IMR-90 (cell line): ENCODE measurements at regions of chr7 and their contacts with region 1.

Region 1: GRCh38 chr7:44082541-44083207 is 344 bp upstream of the POLM start:
- DNase-seq: peak; percentile 98
- ATAC-seq: peak; percentile 98
- H3K4me3 ChIP-seq: peak overlapping the region; percentile 56
- H3K27ac ChIP-seq: peak overlapping the region; percentile 72
- H3K4me1 ChIP-seq: peaks cover 16% of the 10 kb centered on the region
- H3K27me3 ChIP-seq: no peaks in the 10 kb centered on the region
- CTCF ChIP-seq: no peak
- POLR2A ChIP-seq: no peak
- RAD21 ChIP-seq: no peak

Region 2: GRCh38 chr7:43647673-43648472 is 434.8 kb before region 1 on chr7:
- CTCF ChIA-PET with region 1: no interaction called
- POLR2A ChIA-PET with region 1: no interaction called
- dilution Hi-C with region 1: no loop called
- in situ Hi-C with region 1: no loop called
- intact Hi-C with region 1: no loop called
- DNase-seq: peak; percentile 100
- ATAC-seq: peak; percentile 68
- H3K4me3 ChIP-seq: peak overlapping the region; percentile 1; the same call in 1 of the 2 replicates
- H3K27ac ChIP-seq: peak overlapping the region; percentile 95
- H3K4me1 ChIP-seq: peaks cover 42% of the 10 kb centered on the region
- H3K27me3 ChIP-seq: no peaks in the 10 kb centered on the region
- CTCF ChIP-seq: no peak
- POLR2A ChIP-seq: peak; percentile 79
- RAD21 ChIP-seq: no peak

Region 3: DNA sequence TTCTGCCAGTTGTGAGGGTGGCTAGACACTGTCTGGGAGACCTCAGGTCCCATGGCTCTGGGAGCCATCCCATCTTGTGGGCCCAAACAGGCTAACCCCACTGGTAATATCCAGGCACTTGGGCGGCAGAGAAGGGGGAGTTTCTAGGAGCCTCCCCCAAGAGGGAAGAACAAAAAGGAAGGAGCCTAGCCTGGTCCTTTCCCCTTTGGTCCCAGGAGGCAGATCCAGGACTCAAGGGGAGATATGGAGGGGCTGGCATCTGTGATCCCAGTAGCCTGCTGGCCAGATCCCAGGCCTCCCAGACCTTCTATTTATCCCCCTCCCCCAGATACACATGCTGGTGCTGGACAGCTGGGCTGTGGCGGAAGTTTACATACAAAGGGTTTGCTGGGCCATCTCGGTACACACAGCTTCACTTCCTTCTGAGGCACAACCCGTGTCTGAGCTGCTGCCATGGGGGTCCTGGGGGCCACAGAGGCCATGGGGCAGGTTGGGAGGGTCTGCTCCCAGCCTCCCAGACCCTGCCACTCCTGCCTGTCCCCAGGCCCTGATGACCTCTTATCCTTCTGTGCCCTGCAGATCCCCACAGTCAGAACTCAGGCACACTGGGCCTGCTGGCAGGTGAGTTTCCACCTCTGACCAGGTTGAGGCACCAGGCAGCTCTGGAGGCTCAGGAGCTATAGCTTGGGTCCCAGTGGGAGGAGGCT is 18.3 kb after region 1 on chr7:
- CTCF ChIA-PET with region 1: no interaction called
- POLR2A ChIA-PET with region 1: no interaction called
- dilution Hi-C with region 1: no loop called
- in situ Hi-C with region 1: no loop called
- intact Hi-C with region 1: loop called (anchors 2 kb)
- DNase-seq: peak; percentile 40
- ATAC-seq: peak; percentile 30
- H3K4me3 ChIP-seq: no peak overlapping the region
- H3K27ac ChIP-seq: peak overlapping the region; percentile 70
- H3K4me1 ChIP-seq: peaks cover 33% of the 10 kb centered on the region
- H3K27me3 ChIP-seq: no peaks in the 10 kb centered on the region
- CTCF ChIP-seq: no peak
- POLR2A ChIP-seq: no peak
- RAD21 ChIP-seq: no peak

Region 4: DNA sequence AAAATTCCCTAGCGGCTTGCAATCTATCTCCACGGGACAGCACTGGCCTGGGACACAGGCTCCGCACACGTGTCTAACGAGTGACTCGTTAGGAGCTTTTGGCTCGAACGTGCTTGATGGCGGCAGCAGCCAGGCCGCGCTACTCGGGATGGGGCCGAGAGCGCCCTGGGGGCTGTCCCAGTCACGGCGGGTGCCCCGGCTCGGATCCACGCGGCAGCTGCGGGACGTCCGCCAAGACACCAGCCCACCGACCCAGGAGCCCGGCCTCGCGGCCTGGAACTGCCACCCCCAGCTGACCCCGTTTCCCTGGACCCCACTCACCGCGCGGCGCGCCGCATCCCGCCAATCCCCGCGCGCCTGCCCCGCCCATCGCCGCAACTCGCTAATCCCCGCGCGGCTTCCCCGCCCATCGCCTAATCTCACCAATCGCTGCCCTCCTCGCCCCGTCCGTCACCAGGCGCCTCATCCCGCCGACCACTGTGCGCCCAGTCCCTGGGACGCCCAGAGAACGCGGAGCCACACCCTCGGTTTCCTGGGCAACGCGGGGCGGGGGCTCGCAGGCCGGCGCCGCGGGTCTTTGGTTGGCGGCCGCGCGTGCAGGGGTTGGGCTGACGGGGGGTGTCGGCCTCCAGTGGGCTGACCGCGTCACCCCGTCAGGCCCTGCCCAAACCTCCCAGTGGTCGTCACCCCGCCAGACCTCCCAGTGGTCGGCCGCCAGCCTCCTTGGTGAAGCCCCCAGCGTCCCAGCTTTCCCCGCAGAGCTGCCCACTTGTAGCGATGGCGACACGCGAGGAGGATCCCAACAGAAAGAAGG is 40.7 kb after region 1 on chr7 and contains the start of gene POLD2:
- CTCF ChIA-PET with region 1: no interaction called
- POLR2A ChIA-PET with region 1: no interaction called
- dilution Hi-C with region 1: no loop called
- in situ Hi-C with region 1: no loop called
- intact Hi-C with region 1: loop called (anchors 2 kb)
- DNase-seq: peak; percentile 92
- ATAC-seq: peak; percentile 100
- H3K4me3 ChIP-seq: peak within 1 kb of the TSS; percentile 92
- H3K27ac ChIP-seq: peak within 1 kb of the TSS; percentile 62
- H3K4me1 ChIP-seq: peaks cover 6% of the 10 kb centered on the region
- H3K27me3 ChIP-seq: no peaks in the 10 kb centered on the region
- CTCF ChIP-seq: no peak
- POLR2A ChIP-seq: peak; percentile 61
- RAD21 ChIP-seq: no peak; the same call in 1 of the 2 replicates
- total RNA-seq, gene POLD2: 136 and 163 TPM in 2 replicates

Region 5: DNA sequence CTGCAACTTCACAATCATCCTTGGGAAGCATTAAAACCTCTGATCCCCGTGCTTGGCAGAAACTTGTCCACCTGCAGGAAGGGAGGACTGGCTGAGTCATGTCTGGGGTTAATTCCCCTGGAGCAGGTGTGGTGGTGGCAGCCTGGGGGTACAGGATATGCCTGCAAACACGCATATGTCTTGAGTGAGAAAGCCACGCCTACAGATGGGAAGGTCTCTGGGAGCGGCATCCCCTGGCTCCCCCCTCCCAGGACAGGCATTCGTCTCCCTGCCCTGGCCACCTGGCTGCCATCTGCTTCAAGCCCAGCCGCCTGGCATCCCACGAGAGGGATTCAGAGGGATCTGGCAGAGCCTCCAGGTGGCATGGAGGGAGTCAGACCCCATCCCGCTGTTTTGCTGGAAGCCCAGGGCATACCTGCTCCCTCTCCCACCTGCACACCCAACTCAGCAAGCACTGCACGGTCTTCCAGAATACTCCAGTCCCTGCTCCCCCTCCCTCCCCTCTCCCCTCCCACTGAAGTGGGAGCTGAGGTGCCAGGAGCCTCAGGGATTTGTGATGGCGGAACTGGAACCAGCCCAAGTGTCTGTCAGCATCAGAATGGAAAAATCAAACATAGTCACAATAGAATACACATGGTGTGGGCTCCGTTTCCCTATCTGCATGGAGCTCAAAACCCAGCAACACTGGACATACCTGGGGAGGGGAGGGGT is 181.7 kb after region 1 on chr7:
- CTCF ChIA-PET with region 1: no interaction called
- POLR2A ChIA-PET with region 1: no interaction called
- dilution Hi-C with region 1: no loop called
- in situ Hi-C with region 1: no loop called
- intact Hi-C with region 1: no loop called
- DNase-seq: no peak
- ATAC-seq: no peak
- H3K4me3 ChIP-seq: no peak overlapping the region
- H3K27ac ChIP-seq: no peak overlapping the region
- H3K4me1 ChIP-seq: peaks cover 3% of the 10 kb centered on the region
- H3K27me3 ChIP-seq: peaks cover 56% of the 10 kb centered on the region
- CTCF ChIP-seq: no peak
- POLR2A ChIP-seq: no peak
- RAD21 ChIP-seq: no peak